HEK293 (cell line): ENCODE measurements at regions of chr11 and their contacts with region 1.

Region 1: GRCh38 chr11:6682936-6683861 is at the start of gene MRPL17:
- H3K4me3 ChIP-seq: peak within 1 kb of the TSS; percentile 90
- H3K27ac ChIP-seq: peak within 1 kb of the TSS; percentile 70
- H3K4me1 ChIP-seq: no peaks in the 10 kb centered on the region
- CTCF ChIP-seq: peak; percentile 77

Region 2: GRCh38 chr11:6531267-6531752 is 151.9 kb before region 1 on chr11:
- CTCF ChIA-PET with region 1: interaction called, 42 read pairs
- POLR2A ChIA-PET with region 1: interaction called, 4 read pairs
- H3K4me3 ChIP-seq: no peak overlapping the region
- H3K27ac ChIP-seq: no peak overlapping the region
- H3K4me1 ChIP-seq: no peaks in the 10 kb centered on the region
- CTCF ChIP-seq: 0 out of 2 replicates have a peak, but pooled peaks have one; percentile 43

Region 3: GRCh38 chr11:6612213-6613041 is 70.8 kb before region 1 on chr11 and contains the start of gene TAF10:
- CTCF ChIA-PET with region 1: interaction called, 10 read pairs
- POLR2A ChIA-PET with region 1: interaction called, 13 read pairs
- H3K4me3 ChIP-seq: peak within 1 kb of the TSS; percentile 83
- H3K27ac ChIP-seq: peak within 1 kb of the TSS; percentile 70
- H3K4me1 ChIP-seq: no peaks in the 10 kb centered on the region
- CTCF ChIP-seq: peak; percentile 76

Region 4: DNA sequence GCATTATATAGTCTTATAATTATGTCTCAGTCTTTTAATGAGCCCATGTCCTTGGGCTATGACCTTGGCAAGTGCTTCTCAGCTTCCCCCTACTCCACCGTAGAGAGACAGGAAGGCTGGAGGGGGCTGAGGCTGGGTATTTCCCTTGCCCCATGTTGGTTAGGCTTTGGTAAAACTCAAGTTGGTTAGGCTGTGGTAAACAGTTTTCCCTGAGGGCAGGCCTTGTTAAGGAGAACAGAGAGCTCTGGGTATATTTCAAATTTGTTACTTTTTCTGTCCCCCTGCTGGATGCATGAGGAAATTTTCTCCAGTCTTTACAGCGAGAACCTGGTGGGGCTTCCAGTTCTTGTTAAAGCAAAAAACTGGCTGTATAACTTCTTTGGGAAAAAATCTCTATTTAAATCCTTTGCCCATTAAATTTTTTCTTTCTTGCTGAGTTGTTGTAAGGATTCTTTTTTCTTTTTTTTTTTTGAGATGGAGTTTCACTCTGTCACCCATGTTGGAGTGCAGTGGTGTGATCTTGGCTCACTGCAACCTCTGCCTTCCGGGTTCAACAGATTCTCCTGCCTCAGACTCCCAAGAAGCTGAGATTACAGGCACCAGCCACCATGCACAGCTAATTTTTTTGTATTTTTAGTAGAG is 15.3 kb before region 1 on chr11:
- CTCF ChIA-PET with region 1: interaction called, 10 read pairs
- POLR2A ChIA-PET with region 1: interaction called, 7 read pairs
- H3K4me3 ChIP-seq: no peak overlapping the region
- H3K27ac ChIP-seq: no peak overlapping the region
- H3K4me1 ChIP-seq: no peaks in the 10 kb centered on the region
- CTCF ChIP-seq: no peak

Region 5: GRCh38 chr11:6705905-6706535 is 22.8 kb after region 1 on chr11:
- CTCF ChIA-PET with region 1: interaction called, 10 read pairs
- POLR2A ChIA-PET with region 1: interaction called, 3 read pairs
- H3K4me3 ChIP-seq: no peak overlapping the region
- H3K27ac ChIP-seq: no peak overlapping the region
- H3K4me1 ChIP-seq: no peaks in the 10 kb centered on the region
- CTCF ChIP-seq: peak; percentile 18; the same call in 1 of the 2 replicates

Region 6: DNA sequence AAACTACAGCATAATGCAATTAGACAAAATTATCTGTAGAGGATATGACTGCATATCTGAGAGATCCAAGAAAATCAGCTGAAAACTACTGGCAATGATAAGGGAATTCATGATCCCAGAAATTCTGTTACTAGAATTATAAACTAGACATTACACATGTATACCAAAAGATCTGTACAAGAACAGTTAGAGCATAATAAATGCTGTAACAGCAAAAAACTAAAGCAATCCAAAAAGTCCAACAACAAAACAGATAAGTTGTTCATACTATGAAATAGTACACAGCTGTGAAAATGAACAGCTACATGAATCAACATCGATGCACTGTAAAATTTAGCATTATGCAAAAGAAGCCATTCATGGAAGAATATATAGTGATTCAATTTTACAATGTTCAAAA is 330.9 kb after region 1 on chr11:
- CTCF ChIA-PET with region 1: no interaction called
- POLR2A ChIA-PET with region 1: no interaction called
- H3K4me3 ChIP-seq: no peak overlapping the region
- H3K27ac ChIP-seq: no peak overlapping the region
- H3K4me1 ChIP-seq: no peaks in the 10 kb centered on the region
- CTCF ChIP-seq: no peak